Right cardiac atrium (tissue), 5 donors: ENCODE measurements at regions of chr7 and their contacts with region 1.

Region 1: DNA sequence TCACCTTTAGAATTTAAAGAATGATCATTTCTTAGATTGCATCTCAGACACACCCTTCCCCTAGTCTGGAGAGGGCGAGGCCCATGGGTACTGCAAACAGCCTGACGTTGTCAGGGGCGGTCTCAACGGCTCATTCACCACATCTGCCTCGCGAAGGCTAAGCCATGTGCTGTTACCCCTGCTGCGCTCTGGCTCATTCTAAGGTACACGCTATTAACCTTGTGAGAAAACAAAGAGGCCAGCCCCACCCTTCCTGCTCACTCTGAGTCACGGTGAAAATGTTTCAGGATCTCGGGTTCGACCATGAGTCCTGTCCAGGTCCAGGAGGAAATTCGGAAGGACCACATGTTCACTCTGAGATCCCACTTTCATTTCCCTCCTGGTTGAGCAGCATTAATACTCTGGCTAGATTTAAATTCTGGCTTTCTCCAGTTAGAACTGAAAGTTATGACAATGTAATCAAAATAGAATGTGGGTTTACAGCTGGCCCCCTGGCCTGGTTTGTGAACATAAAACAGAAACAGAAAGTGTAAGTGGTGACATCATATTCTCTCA is 55.2 kb downstream of the EGFR start:
- DNase-seq: peak in 2 of 3 donors; percentile 57 to 72
- ATAC-seq: peak; percentile 62 to 84
- H3K4me3 ChIP-seq: peak overlapping the region; percentile 16
- H3K27ac ChIP-seq: peak overlapping the region; percentile 33
- H3K4me1 ChIP-seq: peaks cover 6% of the 10 kb centered on the region
- H3K27me3 ChIP-seq: no peaks in the 10 kb centered on the region

Region 2: GRCh38 chr7:54995631-54996340 is 78.2 kb before region 1 on chr7:
- intact Hi-C with region 1: no loop called
- DNase-seq: no peak
- ATAC-seq: no peak
- H3K4me3 ChIP-seq: no peak overlapping the region
- H3K27ac ChIP-seq: no peak overlapping the region
- H3K4me1 ChIP-seq: no peaks in the 10 kb centered on the region
- H3K27me3 ChIP-seq: no peaks in the 10 kb centered on the region

Region 3: GRCh38 chr7:55018361-55019190 is 55.4 kb before region 1 on chr7 and contains the start of gene EGFR:
- intact Hi-C with region 1: no loop called
- DNase-seq: peak; percentile 87 to 94 (median 93)
- ATAC-seq: peak; percentile 93
- H3K4me3 ChIP-seq: peak within 1 kb of the TSS; percentile 82
- H3K27ac ChIP-seq: peak within 1 kb of the TSS; percentile 71
- H3K4me1 ChIP-seq: peaks cover 6% of the 10 kb centered on the region
- H3K27me3 ChIP-seq: no peaks in the 10 kb centered on the region
- total RNA-seq, gene EGFR: 13.3 to 21.8 (median 15.2) TPM

Region 4: GRCh38 chr7:55129531-55130394 is 55.7 kb after region 1 on chr7:
- intact Hi-C with region 1: loop called in 1 of 4 experiments (anchors 10 kb)
- DNase-seq: peak in 1 of 3 donors; percentile 51
- ATAC-seq: peak in 1 of 2 donors; percentile 29
- H3K4me3 ChIP-seq: no peak overlapping the region
- H3K27ac ChIP-seq: peak overlapping the region; percentile 96
- H3K4me1 ChIP-seq: peaks cover 47% of the 10 kb centered on the region
- H3K27me3 ChIP-seq: no peaks in the 10 kb centered on the region